Naive thymus-derived CD4-positive, alpha-beta T cell (primary cell): ENCODE measurements at regions of chr21 and their contacts with region 1.

Region 1: DNA sequence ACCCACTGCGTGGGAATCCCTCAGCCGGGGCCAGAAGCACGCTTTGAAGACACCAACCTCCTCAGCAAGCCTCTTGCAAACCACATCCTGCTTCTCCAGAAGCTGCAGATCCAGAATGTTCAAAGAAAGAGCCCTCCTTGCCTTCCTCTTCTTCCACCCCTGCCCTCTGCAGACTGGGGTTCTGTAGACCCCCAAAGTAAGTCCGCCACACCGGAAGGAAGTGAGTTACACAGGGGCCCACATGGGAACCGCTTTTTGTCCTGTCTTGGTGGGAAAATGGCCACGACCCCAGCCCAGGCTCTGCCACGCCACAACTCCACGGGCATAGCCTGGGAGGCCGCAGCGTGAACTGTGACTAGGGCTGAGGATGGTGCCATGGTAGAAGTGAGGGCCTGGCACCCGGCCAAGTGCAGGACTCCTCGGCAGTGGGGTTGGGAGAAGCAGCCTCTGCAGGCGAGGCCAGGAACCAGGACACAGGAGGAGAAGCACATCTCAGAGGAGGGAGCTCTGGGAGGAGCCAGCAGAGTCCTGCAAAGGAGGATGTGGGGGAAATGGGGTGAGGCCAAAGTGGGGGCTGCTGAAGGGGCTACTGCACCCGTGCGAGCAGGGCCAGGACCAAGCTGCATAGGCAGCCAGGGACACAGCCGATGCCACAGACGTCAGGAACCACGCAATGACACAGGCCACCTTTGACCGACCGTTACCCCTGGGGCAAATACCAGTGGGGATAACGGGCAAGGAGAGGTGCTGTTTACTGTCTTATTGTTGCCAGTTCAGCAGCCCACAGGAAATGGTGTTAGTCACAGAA is 30.9 kb downstream of the PDE9A start:
- DNase-seq: peak; percentile 26 to 72 (median 59)
- ATAC-seq: peak; percentile 61
- H3K4me3 ChIP-seq: peak overlapping the region; percentile 12
- H3K4me3 Mint-ChIP-seq: peak overlapping the region; percentile 79 to 94 (median 86)
- H3K27ac ChIP-seq: peak overlapping the region; percentile 53
- H3K27ac Mint-ChIP-seq: peak overlapping the region; percentile 66 to 99 (median 92)
- H3K4me1 ChIP-seq: peaks cover 14 to 44% of the 10 kb centered on the region in 2 donors
- H3K4me1 Mint-ChIP-seq: peaks cover 35 to 59% (median 57%) of the 10 kb centered on the region in 7 donors
- H3K27me3 ChIP-seq: no peaks in the 10 kb centered on the region
- H3K27me3 Mint-ChIP-seq: no peaks in the 10 kb centered on the region

Region 2: GRCh38 chr21:42614811-42615659 is 69.3 kb before region 1 on chr21:
- CTCF ChIA-PET with region 1: no interaction called
- POLR2A ChIA-PET with region 1: interaction called, 3 read pairs
- intact Hi-C with region 1: loop called in 1 of 2 experiments (anchors 2 kb)
- DNase-seq: peak; percentile 23 to 59 (median 56)
- ATAC-seq: peak; percentile 72
- H3K4me3 ChIP-seq: peak overlapping the region; percentile 60
- H3K4me3 Mint-ChIP-seq: no peak overlapping the region
- H3K27ac ChIP-seq: peak overlapping the region; percentile 31
- H3K27ac Mint-ChIP-seq: no peak overlapping the region
- H3K4me1 ChIP-seq: peaks cover 12 to 36% of the 10 kb centered on the region in 2 donors
- H3K4me1 Mint-ChIP-seq: peaks cover 3 to 28% (median 13%) of the 10 kb centered on the region in 7 donors
- H3K27me3 ChIP-seq: no peaks in the 10 kb centered on the region
- H3K27me3 Mint-ChIP-seq: peaks cover 0 to 17% (median 0%) of the 10 kb centered on the region in 5 donors

Region 3: GRCh38 chr21:42636538-42636930 is 47.8 kb before region 1 on chr21:
- CTCF ChIA-PET with region 1: no interaction called
- POLR2A ChIA-PET with region 1: no interaction called
- intact Hi-C with region 1: no loop called
- DNase-seq: no peak
- ATAC-seq: no peak
- H3K4me3 ChIP-seq: no peak overlapping the region
- H3K4me3 Mint-ChIP-seq: no peak overlapping the region
- H3K27ac ChIP-seq: no peak overlapping the region
- H3K27ac Mint-ChIP-seq: no peak overlapping the region
- H3K4me1 ChIP-seq: peaks cover 0 to 2% of the 10 kb centered on the region in 2 donors
- H3K4me1 Mint-ChIP-seq: peaks cover 0 to 2% (median 0%) of the 10 kb centered on the region in 7 donors
- H3K27me3 ChIP-seq: no peaks in the 10 kb centered on the region
- H3K27me3 Mint-ChIP-seq: peaks cover 0 to 5% (median 0%) of the 10 kb centered on the region in 5 donors

Region 4: GRCh38 chr21:42737951-42738590 is 53.8 kb after region 1 on chr21:
- CTCF ChIA-PET with region 1: no interaction called
- POLR2A ChIA-PET with region 1: no interaction called
- intact Hi-C with region 1: loop called in 1 of 2 experiments (anchors 5 kb)
- DNase-seq: peak in 7 of 9 donors; percentile 39 to 76 (median 61)
- ATAC-seq: peak; percentile 88
- H3K4me3 ChIP-seq: peak overlapping the region; percentile 43
- H3K4me3 Mint-ChIP-seq: peak overlapping the region in 9 of 10 donors; percentile 70 to 86 (median 80)
- H3K27ac ChIP-seq: peak overlapping the region; percentile 78
- H3K27ac Mint-ChIP-seq: peak overlapping the region; percentile 68 to 100 (median 99)
- H3K4me1 ChIP-seq: peaks cover 13 to 33% of the 10 kb centered on the region in 2 donors
- H3K4me1 Mint-ChIP-seq: peaks cover 9 to 61% (median 53%) of the 10 kb centered on the region in 7 donors
- H3K27me3 ChIP-seq: no peaks in the 10 kb centered on the region
- H3K27me3 Mint-ChIP-seq: no peaks in the 10 kb centered on the region

Region 5: GRCh38 chr21:42781150-42781970 is 97.0 kb after region 1 on chr21:
- CTCF ChIA-PET with region 1: no interaction called
- POLR2A ChIA-PET with region 1: interaction called, 4 read pairs
- intact Hi-C with region 1: loop called in 1 of 2 experiments (anchors 2 kb)
- DNase-seq: peak in 1 of 9 donors; percentile 11
- ATAC-seq: no peak
- H3K4me3 ChIP-seq: peak overlapping the region; percentile 30
- H3K4me3 Mint-ChIP-seq: peak overlapping the region; percentile 40 to 92 (median 80)
- H3K27ac ChIP-seq: peak overlapping the region; percentile 7
- H3K27ac Mint-ChIP-seq: peak overlapping the region; percentile 31 to 100 (median 87)
- H3K4me1 ChIP-seq: peaks cover 14 to 44% of the 10 kb centered on the region in 2 donors
- H3K4me1 Mint-ChIP-seq: peaks cover 35 to 65% (median 48%) of the 10 kb centered on the region in 7 donors
- H3K27me3 ChIP-seq: no peaks in the 10 kb centered on the region
- H3K27me3 Mint-ChIP-seq: peaks cover 0 to 37% (median 0%) of the 10 kb centered on the region in 5 donors

Region 6: DNA sequence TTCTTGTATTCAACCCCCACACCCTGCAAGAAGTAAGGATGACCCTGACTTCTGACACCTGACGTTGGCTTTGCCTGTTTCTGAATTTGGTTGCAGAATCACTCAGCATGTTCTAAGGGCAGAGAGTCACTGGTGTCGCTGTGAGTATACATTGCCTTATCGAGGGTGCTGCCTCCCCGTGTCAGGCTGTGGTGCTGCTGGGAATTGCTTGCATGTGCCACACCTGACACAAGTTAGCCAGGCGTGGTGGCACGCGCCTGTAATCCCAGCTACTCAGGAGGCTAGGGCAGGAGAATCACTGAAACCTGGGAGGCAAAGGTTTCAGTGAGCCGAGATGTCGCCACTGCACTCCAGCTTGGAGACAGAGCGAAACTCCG is 149.1 kb after region 1 on chr21:
- CTCF ChIA-PET with region 1: interaction called, 3 read pairs
- POLR2A ChIA-PET with region 1: no interaction called
- intact Hi-C with region 1: loop called in 1 of 2 experiments (anchors 5 kb)
- DNase-seq: peak in 8 of 9 donors; percentile 52 to 72 (median 60)
- ATAC-seq: peak; percentile 85
- H3K4me3 ChIP-seq: peak overlapping the region; percentile 32
- H3K4me3 Mint-ChIP-seq: peak overlapping the region; percentile 72 to 86 (median 83)
- H3K27ac ChIP-seq: peak overlapping the region; percentile 4
- H3K27ac Mint-ChIP-seq: peak overlapping the region; percentile 16 to 94 (median 83)
- H3K4me1 ChIP-seq: peaks cover 12 to 29% of the 10 kb centered on the region in 2 donors
- H3K4me1 Mint-ChIP-seq: peaks cover 22 to 39% (median 33%) of the 10 kb centered on the region in 7 donors
- H3K27me3 ChIP-seq: no peaks in the 10 kb centered on the region
- H3K27me3 Mint-ChIP-seq: peaks cover 0 to 15% (median 3%) of the 10 kb centered on the region in 5 donors